ENCODE measurements at regions of chr9 and their contacts with region 1.

Region 1: DNA sequence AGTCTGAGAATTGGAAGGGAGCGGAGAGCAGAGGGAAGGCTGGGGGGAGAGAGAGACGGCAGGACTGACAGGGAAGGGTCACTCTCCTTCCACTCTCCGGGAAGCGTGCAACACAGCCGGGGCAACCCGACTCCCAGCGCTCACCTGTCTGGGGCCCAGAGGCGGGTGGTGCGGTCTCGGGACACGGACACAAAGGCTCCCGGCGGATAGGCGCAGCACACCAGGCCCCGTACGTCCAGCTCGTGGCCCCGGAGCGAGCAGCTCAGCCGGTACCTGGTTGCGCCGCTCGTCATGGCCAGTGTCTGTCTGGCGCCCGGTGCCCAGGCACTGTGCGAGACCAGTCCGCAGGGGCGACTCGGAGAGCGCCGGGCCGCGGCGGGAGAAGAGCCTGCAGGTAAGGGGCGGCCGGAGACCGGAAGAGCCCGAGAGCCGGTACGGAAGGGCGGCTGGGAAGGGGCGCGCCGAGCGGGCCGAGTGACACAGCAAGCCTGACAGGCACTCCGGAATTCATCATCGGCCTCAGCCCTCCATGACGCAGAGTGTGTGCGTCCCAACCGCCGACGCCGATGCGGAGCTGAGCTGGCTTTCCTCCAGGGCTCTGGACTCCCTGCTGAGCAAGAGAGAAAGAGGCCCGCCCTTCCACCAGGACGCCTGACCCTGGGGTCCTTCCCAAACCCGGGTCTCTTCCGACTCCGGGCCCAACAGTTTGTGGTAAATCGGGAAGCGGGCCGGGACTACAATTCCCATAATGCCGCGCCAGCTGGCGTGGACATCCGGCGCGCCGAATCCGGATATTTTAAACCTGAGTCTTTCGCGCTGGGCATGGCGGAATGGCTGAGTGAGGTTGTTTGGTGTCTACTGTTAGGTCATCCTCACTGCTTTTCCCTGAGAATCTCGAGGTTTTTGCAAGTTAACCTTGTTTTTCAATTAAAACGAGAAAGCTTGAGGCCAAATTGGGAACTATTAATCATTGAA is at the start of gene PLAA:
- DNase-seq: peak; percentile 82
- ATAC-seq: peak; percentile 97
- H3K4me3 Mint-ChIP-seq: peak within 1 kb of the TSS; percentile 96
- H3K27ac Mint-ChIP-seq: peak within 1 kb of the TSS; percentile 98
- H3K4me1 Mint-ChIP-seq: peaks cover 37% of the 10 kb centered on the region
- H3K27me3 Mint-ChIP-seq: peaks cover 9% of the 10 kb centered on the region
- CTCF ChIP-seq: no peak
- total RNA-seq, gene PLAA: 25.6 and 31.3 TPM in 2 replicates

Region 2: GRCh38 chr9:25658571-25658970 is 1288.5 kb before region 1 on chr9:
- CTCF ChIA-PET with region 1: no interaction called
- POLR2A ChIA-PET with region 1: no interaction called
- intact Hi-C with region 1: no loop called
- DNase-seq: no peak
- ATAC-seq: no peak
- H3K4me3 Mint-ChIP-seq: no peak overlapping the region
- H3K27ac Mint-ChIP-seq: no peak overlapping the region
- H3K4me1 Mint-ChIP-seq: no peaks in the 10 kb centered on the region
- H3K27me3 Mint-ChIP-seq: no peaks in the 10 kb centered on the region
- CTCF ChIP-seq: no peak

Region 3: DNA sequence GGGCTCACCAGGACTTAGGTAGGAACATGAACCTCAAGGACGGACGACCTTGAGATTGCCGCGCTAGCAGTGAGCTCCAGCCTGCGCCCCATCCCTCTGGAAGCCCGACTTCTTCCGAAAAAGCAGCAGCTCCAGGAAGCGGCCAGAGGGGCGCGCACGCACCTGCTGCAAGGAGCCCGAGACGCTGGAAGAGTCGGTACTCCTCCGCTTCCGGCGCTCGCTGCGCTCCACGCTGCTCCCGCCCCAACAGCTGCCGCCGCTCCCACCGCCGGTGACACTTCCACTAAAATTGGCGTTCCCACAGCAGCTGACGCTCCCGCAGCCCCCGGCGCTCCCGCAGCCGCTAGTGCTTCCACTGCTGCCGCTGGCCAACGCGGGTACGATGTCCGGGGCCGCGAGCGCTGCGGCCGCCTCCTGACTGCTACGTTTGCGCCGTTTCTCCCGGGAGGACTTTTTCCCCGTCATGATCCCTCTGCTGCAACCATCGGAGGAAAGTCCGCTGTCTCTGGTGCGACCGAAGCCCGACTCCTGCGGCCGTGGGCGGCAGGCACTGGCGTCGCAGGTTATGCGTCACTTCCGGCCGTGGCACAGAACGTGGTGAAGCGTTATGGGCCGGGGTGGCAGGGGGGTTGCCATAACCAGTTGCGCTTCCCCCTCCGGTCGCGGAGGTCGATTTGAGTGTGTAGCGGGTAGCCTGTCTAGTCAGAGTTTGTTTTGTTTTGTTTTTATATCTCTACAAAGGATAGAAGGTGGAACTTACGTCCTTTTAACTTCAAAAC is 54.6 kb before region 1 on chr9 and contains the start of gene CAAP1:
- CTCF ChIA-PET with region 1: no interaction called
- POLR2A ChIA-PET with region 1: interaction called, 32 read pairs
- intact Hi-C with region 1: loop called (anchors 1 kb)
- DNase-seq: peak; percentile 87
- ATAC-seq: peak; percentile 96
- H3K4me3 Mint-ChIP-seq: peak within 1 kb of the TSS; percentile 100
- H3K27ac Mint-ChIP-seq: peak within 1 kb of the TSS; percentile 98
- H3K4me1 Mint-ChIP-seq: peaks cover 44% of the 10 kb centered on the region
- H3K27me3 Mint-ChIP-seq: no peaks in the 10 kb centered on the region
- CTCF ChIP-seq: no peak
- total RNA-seq, gene CAAP1: 15.1 and 16.6 TPM in 2 replicates

Region 4: GRCh38 chr9:26925609-26926008 is 21.4 kb before region 1 on chr9:
- CTCF ChIA-PET with region 1: no interaction called
- POLR2A ChIA-PET with region 1: no interaction called
- intact Hi-C with region 1: loop called (anchors 2 kb)
- DNase-seq: no peak
- ATAC-seq: no peak
- H3K4me3 Mint-ChIP-seq: no peak overlapping the region
- H3K27ac Mint-ChIP-seq: no peak overlapping the region
- H3K4me1 Mint-ChIP-seq: no peaks in the 10 kb centered on the region
- H3K27me3 Mint-ChIP-seq: no peaks in the 10 kb centered on the region
- CTCF ChIP-seq: no peak

Region 5: DNA sequence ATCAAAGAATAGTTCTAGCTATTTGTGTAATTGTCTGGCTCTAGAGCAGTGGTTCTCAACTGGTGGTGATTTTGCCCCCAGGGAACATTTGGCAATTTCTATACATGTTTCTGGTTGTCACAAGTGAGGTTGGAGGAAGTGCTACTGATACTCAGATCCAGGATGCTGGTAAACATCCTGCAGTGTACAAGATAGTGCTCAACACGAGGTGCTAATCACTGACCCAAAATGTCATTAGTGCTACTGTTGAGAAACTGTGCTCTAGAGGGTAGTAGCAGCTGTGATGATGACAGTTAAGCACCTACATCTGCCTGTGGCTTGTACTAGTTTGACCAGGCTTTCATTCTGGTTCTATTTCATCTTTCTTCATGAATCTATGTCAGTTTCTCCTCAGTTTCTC is 36.3 kb after region 1 on chr9:
- CTCF ChIA-PET with region 1: no interaction called
- POLR2A ChIA-PET with region 1: no interaction called
- intact Hi-C with region 1: no loop called
- DNase-seq: no peak
- ATAC-seq: no peak
- H3K4me3 Mint-ChIP-seq: no peak overlapping the region
- H3K27ac Mint-ChIP-seq: no peak overlapping the region
- H3K4me1 Mint-ChIP-seq: no peaks in the 10 kb centered on the region
- H3K27me3 Mint-ChIP-seq: no peaks in the 10 kb centered on the region
- CTCF ChIP-seq: no peak

Region 6: DNA sequence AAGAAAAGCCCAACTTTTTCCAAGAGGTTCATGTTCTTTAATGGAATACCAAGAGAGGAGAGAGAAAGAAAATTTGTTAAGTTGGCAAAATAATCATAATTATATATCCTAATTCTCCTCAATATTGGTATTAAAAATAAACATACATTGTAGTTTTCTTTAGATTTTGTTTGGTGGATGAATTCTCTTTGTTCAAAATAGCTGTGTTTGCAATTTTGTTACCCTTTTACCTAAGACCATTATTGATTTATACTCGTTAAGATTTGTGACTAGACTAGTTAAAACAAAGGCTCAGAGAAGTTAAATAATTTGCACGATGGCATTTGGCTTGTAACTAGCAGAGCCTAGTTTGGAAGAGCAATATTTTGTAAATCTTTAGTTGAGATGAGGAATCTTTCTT is 48.8 kb after region 1 on chr9:
- CTCF ChIA-PET with region 1: no interaction called
- POLR2A ChIA-PET with region 1: interaction called, 11 read pairs
- intact Hi-C with region 1: no loop called
- DNase-seq: no peak
- ATAC-seq: no peak
- H3K4me3 Mint-ChIP-seq: no peak overlapping the region
- H3K27ac Mint-ChIP-seq: no peak overlapping the region
- H3K4me1 Mint-ChIP-seq: no peaks in the 10 kb centered on the region
- H3K27me3 Mint-ChIP-seq: no peaks in the 10 kb centered on the region
- CTCF ChIP-seq: no peak

Region 7: DNA sequence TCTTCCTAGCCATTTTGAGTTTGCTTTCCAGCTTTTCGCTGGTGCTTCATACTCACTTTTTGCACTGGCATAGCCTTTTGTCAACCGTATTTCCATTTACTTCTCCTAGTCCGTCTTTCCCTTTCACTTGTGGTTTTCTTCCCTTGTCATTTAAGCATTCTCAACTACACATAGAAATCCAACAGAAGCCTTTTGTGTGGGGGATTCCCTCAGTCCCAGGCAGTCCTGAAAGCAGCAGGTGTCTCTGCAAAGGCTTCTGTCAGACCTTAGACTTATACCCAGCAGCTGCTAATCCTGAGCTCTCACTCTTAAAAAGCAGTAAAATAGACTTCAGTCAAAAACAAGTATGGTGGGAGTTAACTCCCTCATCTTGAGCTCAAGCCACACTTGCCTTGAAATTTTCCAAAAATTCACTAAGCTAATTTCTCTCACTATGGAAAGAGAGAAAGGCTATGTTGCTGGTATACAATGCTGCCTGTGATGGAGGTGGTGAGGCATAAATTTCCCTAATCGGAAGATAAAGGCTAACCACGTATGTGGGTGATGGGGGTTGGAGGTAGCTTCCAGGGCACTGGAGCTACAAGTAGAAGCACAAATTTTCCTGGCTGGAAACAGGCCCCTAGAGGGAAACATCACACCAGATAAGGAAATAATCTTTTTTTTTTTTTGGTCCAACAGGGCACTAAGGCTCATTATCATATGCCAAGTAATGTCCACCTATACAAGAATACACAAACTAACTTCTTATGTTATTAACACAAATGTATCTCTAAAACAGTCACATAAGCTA is 542.2 kb after region 1 on chr9:
- CTCF ChIA-PET with region 1: no interaction called
- POLR2A ChIA-PET with region 1: no interaction called
- intact Hi-C with region 1: loop called (anchors 10 kb)
- DNase-seq: no peak
- ATAC-seq: peak; percentile 40
- H3K4me3 Mint-ChIP-seq: peak overlapping the region; percentile 20
- H3K27ac Mint-ChIP-seq: peak overlapping the region; percentile 46
- H3K4me1 Mint-ChIP-seq: peaks cover 78% of the 10 kb centered on the region
- H3K27me3 Mint-ChIP-seq: no peaks in the 10 kb centered on the region
- CTCF ChIP-seq: no peak

Region 8: GRCh38 chr9:27573634-27574590 is 626.9 kb after region 1 on chr9:
- CTCF ChIA-PET with region 1: no interaction called
- POLR2A ChIA-PET with region 1: interaction called, 6 read pairs
- intact Hi-C with region 1: loop called (anchors 1 kb)
- DNase-seq: peak; percentile 77
- ATAC-seq: peak; percentile 88
- H3K4me3 Mint-ChIP-seq: peak overlapping the region; percentile 97
- H3K27ac Mint-ChIP-seq: peak overlapping the region; percentile 99
- H3K4me1 Mint-ChIP-seq: peaks cover 24% of the 10 kb centered on the region
- H3K27me3 Mint-ChIP-seq: no peaks in the 10 kb centered on the region
- CTCF ChIP-seq: no peak

Measured in activated B cell treated with CpG ODN at 0.5 μM for 24 hours (primary cell).